CD4-positive, alpha-beta T cell (primary cell): ENCODE measurements at regions of chr2 and their contacts with region 1.

Region 1: DNA sequence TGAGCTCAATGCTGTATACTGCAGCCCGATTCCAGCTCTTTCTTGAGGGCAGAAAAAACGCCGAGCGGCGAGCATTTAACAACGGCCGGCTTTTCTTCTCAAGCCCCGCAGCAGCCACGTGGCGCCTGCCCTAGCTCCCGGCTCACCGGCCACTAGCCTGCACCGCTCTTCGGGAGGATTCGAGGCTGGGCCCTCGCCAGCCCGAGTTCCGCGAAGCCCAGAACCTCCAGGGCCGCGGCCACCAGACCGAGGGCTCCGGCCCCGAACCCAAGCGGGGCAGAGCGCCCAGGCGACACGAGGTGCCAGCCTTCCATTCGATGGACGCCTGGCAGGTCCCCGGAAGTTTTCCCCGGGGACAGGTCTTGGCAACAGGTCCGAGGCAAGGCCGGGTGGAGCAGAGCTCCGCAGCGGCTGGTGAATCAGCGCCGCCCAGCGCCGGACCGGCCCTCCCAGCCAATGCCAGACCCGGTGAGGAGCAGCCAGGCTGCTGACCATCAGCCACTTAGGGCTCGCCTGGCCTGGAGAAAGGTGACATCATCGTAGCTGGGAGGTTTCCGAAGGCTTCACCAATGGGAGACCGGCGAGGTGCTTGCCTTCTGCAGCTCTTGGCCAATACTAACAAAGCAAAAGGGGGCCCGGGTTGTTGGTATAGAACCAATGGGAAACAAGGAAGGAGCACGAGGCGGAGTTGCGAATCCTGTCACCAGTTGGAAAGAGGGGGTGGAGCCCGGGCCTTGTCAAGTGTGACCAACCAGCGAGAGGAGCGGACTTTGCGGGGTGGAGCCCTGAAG is 544 bp upstream of the MXD1 start:
- DNase-seq: peak in 9 of 14 experiments; percentile 13 to 100 (median 100)
- ATAC-seq: peak; percentile 92
- H3K4me3 ChIP-seq: peak overlapping the region; percentile 86
- H3K4me3 Mint-ChIP-seq: peak overlapping the region; percentile 89
- H3K27ac ChIP-seq: peak overlapping the region; percentile 94
- H3K27ac Mint-ChIP-seq: peak overlapping the region; percentile 75
- H3K4me1 ChIP-seq: peaks cover 15% of the 10 kb centered on the region
- H3K4me1 Mint-ChIP-seq: peaks cover 33% of the 10 kb centered on the region
- H3K27me3 ChIP-seq: no peaks in the 10 kb centered on the region
- H3K27me3 Mint-ChIP-seq: no peaks in the 10 kb centered on the region
- CTCF ChIP-seq: no peak

Region 2: DNA sequence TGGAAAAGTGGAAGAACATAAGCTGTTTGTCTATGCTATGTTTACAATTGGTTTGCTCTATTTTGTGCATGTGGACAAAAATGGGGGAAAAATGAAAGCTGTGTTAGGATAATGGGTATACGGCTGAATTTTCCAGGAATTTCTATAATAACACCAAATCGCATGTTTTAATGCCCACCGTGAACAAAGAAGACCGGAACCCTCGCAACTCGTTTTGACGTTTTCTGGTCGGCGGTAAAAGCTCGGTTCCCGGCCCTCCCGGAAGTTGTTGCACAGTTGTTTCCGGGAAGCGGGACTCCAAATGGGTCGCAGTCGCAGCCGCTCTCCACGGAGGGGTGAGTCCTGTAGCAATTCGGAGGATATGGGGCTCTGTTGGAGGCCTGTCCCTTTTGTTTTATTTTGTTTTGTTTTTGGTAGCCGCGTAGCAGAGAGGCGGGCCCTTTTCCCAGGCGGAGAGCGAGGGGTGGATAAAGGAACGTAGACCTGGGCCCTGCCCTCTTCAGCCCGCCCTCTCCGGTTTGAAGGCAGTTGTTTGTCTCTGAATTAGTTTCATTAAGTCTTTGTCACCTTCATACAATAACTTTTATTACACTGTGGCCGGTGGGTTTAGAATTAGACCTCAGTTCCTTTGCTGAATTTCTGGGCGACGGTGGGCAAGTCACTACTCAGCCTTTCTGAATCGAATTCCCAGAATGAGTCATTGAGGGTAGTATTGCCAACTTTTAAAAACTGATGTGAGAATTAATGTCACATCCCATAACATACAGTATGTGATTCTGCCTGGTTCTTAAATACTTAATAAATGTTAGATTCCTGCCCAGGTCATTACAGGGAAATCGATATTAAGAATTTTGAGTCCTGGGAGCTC is 20.4 kb before region 1 on chr2 and contains the start of gene SNRNP27:
- CTCF ChIA-PET with region 1: interaction called, 3 read pairs
- POLR2A ChIA-PET with region 1: interaction called, 35 read pairs
- intact Hi-C with region 1: loop called in 1 of 2 experiments (anchors 2 kb)
- DNase-seq: peak; percentile 74 to 90 (median 81)
- ATAC-seq: peak; percentile 93
- H3K4me3 ChIP-seq: peak within 1 kb of the TSS; percentile 84
- H3K4me3 Mint-ChIP-seq: peak within 1 kb of the TSS; percentile 100
- H3K27ac ChIP-seq: peak within 1 kb of the TSS; percentile 66 to 77
- H3K27ac Mint-ChIP-seq: peak within 1 kb of the TSS; percentile 99
- H3K4me1 ChIP-seq: peaks cover 19% of the 10 kb centered on the region
- H3K4me1 Mint-ChIP-seq: peaks cover 51% of the 10 kb centered on the region
- H3K27me3 ChIP-seq: no peaks in the 10 kb centered on the region
- H3K27me3 Mint-ChIP-seq: no peaks in the 10 kb centered on the region
- CTCF ChIP-seq: no peak
- total RNA-seq, gene SNRNP27: 50.9 to 54.8 TPM

Region 3: DNA sequence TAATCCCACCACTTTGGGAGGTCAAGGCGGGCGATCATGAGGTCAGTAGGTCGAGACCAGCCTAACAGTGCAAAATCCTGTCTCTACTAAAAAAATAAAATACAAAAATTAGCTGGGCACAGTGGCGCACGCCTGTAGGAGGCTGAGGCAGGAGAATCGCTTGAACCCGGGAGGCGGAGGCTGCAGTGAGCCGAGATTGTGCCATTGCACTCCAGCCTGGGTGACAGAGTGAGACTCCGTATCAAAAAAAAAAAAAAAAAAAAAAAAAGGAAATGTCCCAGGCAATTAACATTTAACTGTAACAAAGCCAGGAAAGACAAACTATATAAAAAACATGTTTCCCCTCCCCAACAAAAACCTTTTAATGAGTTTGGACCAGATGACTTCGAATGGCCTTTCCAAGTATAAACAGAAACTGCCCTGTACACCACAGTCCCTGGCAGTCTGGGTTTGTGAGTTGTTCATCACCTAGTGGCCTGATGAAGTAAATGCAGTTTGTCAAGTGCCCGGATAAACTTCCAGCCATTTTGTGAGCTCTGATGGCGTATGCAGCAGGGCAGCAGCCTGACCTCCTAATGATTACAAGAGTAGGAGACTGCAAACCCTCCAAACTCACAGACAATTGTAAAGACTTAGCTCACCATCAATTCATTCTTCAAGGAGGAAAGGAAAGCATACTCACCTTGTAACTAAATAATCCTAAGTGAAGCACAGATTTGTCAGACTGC is 156.3 kb after region 1 on chr2:
- CTCF ChIA-PET with region 1: interaction called, 12 read pairs
- POLR2A ChIA-PET with region 1: interaction called, 85 read pairs
- intact Hi-C with region 1: loop called in 1 of 2 experiments (anchors 5 kb)
- DNase-seq: peak; percentile 30 to 89 (median 47)
- ATAC-seq: peak; percentile 72
- H3K4me3 ChIP-seq: peak overlapping the region; percentile 24
- H3K4me3 Mint-ChIP-seq: peak overlapping the region; percentile 83
- H3K27ac ChIP-seq: peak overlapping the region; percentile 40 to 84
- H3K27ac Mint-ChIP-seq: peak overlapping the region; percentile 86
- H3K4me1 ChIP-seq: peaks cover 46% of the 10 kb centered on the region
- H3K4me1 Mint-ChIP-seq: peaks cover 61% of the 10 kb centered on the region
- H3K27me3 ChIP-seq: no peaks in the 10 kb centered on the region
- H3K27me3 Mint-ChIP-seq: no peaks in the 10 kb centered on the region
- CTCF ChIP-seq: peak; percentile 80

Region 4: GRCh38 chr2:70124983-70125480 is 210.7 kb after region 1 on chr2:
- CTCF ChIA-PET with region 1: no interaction called
- POLR2A ChIA-PET with region 1: interaction called, 58 read pairs
- intact Hi-C with region 1: no loop called
- DNase-seq: peak; percentile 57 to 88 (median 62)
- ATAC-seq: peak; percentile 59
- H3K4me3 ChIP-seq: peak overlapping the region; percentile 83
- H3K4me3 Mint-ChIP-seq: peak overlapping the region; percentile 93
- H3K27ac ChIP-seq: peak overlapping the region; percentile 92 to 99
- H3K27ac Mint-ChIP-seq: peak overlapping the region; percentile 99
- H3K4me1 ChIP-seq: peaks cover 72% of the 10 kb centered on the region
- H3K4me1 Mint-ChIP-seq: peaks cover 76% of the 10 kb centered on the region
- H3K27me3 ChIP-seq: no peaks in the 10 kb centered on the region
- H3K27me3 Mint-ChIP-seq: no peaks in the 10 kb centered on the region
- CTCF ChIP-seq: no peak

Region 5: DNA sequence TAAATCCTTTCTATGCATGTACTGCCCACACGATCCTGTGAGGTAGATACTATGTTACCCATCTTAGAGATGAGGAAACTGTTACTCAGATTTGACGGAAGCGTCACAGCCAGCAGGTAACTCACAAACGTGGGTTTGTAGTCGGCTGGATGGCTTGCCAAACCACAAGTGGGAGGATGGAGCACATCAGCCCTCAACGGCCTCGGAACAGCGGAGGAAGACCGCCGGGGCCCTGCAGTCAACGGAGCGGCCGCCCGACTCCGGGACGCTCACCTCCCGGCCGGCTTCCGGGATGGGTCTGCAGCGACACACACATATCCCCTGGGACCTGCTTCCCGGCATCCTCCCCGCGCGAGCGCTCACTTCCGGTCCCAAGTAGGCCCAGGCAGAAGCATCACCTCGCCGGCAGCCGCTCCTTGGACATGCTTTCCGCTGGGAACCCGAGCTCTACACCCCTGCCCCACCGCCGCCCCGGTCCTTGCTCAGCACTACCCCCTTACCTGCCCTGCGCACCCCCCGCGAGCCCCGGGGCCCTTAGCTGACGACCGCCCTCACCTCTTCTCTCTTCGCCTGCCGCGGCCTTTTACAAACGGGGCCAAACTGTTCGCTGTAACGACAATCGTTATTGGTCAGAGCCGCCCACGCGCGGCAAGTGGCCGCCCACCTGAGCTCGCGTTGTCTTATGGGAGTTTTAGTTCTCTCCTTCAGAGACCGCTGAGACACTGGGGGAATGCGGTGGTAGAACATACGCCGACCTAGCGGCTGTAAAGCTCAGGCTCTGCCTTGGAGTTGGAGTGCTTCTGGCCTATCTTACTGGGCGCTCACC is 276.3 kb after region 1 on chr2 and contains the start of gene C2orf42:
- CTCF ChIA-PET with region 1: interaction called, 6 read pairs
- POLR2A ChIA-PET with region 1: interaction called, 89 read pairs
- intact Hi-C with region 1: loop called (anchors 1 kb)
- DNase-seq: peak; percentile 89 to 98 (median 92)
- ATAC-seq: peak; percentile 81
- H3K4me3 ChIP-seq: peak within 1 kb of the TSS; percentile 88
- H3K4me3 Mint-ChIP-seq: peak within 1 kb of the TSS; percentile 91
- H3K27ac ChIP-seq: peak within 1 kb of the TSS; percentile 95 to 98
- H3K27ac Mint-ChIP-seq: peak within 1 kb of the TSS; percentile 95
- H3K4me1 ChIP-seq: peaks cover 7% of the 10 kb centered on the region
- H3K4me1 Mint-ChIP-seq: peaks cover 12% of the 10 kb centered on the region
- H3K27me3 ChIP-seq: no peaks in the 10 kb centered on the region
- H3K27me3 Mint-ChIP-seq: no peaks in the 10 kb centered on the region
- CTCF ChIP-seq: peak; percentile 21
- total RNA-seq, gene C2orf42: 16.9 to 18.4 TPM

Region 6: DNA sequence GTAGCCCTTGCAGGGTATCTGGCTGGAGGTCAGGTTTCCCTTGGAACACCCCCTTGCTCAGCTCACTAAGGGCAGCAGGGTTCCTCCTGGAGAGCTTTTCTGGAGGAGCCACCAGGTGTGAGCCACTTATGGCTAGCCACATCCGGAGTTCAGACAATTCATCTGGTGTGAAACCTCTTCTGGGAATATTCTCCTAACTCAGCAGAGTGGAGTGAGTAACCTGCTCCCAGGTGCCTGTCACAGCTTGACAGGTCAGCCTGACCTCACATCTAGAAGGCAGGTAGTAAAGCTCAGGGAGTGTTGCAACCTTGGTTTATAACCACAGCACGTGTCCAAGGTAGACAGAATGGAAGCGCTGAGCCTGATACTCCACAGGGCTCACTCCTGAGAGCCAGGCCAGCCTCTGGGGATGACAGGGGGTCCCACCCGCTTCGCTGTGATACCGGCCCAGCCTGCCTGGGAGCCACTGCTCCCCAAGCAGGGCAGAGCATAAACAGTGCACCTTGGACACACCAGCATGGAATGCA is 701.9 kb after region 1 on chr2:
- CTCF ChIA-PET with region 1: no interaction called
- POLR2A ChIA-PET with region 1: no interaction called
- intact Hi-C with region 1: loop called in 1 of 2 experiments (anchors 5 kb)
- DNase-seq: no peak
- ATAC-seq: no peak
- H3K4me3 ChIP-seq: no peak overlapping the region
- H3K4me3 Mint-ChIP-seq: no peak overlapping the region
- H3K27ac ChIP-seq: no peak overlapping the region
- H3K27ac Mint-ChIP-seq: no peak overlapping the region
- H3K4me1 ChIP-seq: no peaks in the 10 kb centered on the region
- H3K4me1 Mint-ChIP-seq: no peaks in the 10 kb centered on the region
- H3K27me3 ChIP-seq: peaks cover 0 to under 1% of the 10 kb centered on the region in 2 experiments
- H3K27me3 Mint-ChIP-seq: no peaks in the 10 kb centered on the region
- CTCF ChIP-seq: no peak